Activated CD4-positive, alpha-beta T cell treated with anti-CD3 and anti-CD28 coated beads for 36 hours (primary cell): ENCODE measurements at regions of chr13 and their contacts with region 1.

Region 1: GRCh38 chr13:52011632-52012511 is at the start of gene ALG11:
- DNase-seq: peak; percentile 100
- ATAC-seq: peak; percentile 99
- H3K4me3 Mint-ChIP-seq: peak within 1 kb of the TSS; percentile 100
- H3K27ac Mint-ChIP-seq: peak within 1 kb of the TSS; percentile 91
- H3K4me1 Mint-ChIP-seq: peaks cover 20% of the 10 kb centered on the region
- H3K27me3 Mint-ChIP-seq: peaks cover 17% of the 10 kb centered on the region
- total RNA-seq, gene ALG11: 14.1 to 18.1 TPM

Region 2: GRCh38 chr13:51583875-51584730 is 427.8 kb before region 1 on chr13 and contains the start of gene WDFY2:
- CTCF ChIA-PET with region 1: no interaction called
- POLR2A ChIA-PET with region 1: no interaction called
- intact Hi-C with region 1: loop called (anchors 1 to 2 kb)
- DNase-seq: peak; percentile 100
- ATAC-seq: peak; percentile 88
- H3K4me3 Mint-ChIP-seq: peak within 1 kb of the TSS; percentile 89
- H3K27ac Mint-ChIP-seq: peak within 1 kb of the TSS; percentile 95
- H3K4me1 Mint-ChIP-seq: peaks cover 37% of the 10 kb centered on the region
- H3K27me3 Mint-ChIP-seq: no peaks in the 10 kb centered on the region
- total RNA-seq, gene WDFY2: 7.4 to 9.5 TPM

Region 3: GRCh38 chr13:51825165-51825592 is 186.7 kb before region 1 on chr13:
- CTCF ChIA-PET with region 1: no interaction called
- POLR2A ChIA-PET with region 1: no interaction called
- intact Hi-C with region 1: loop called in 1 of 2 experiments (anchors 5 kb)
- DNase-seq: no peak
- ATAC-seq: peak; percentile 40
- H3K4me3 Mint-ChIP-seq: peak overlapping the region; percentile 69
- H3K27ac Mint-ChIP-seq: peak overlapping the region; percentile 92
- H3K4me1 Mint-ChIP-seq: peaks cover 91% of the 10 kb centered on the region
- H3K27me3 Mint-ChIP-seq: no peaks in the 10 kb centered on the region

Region 4: GRCh38 chr13:52061587-52061986 is 49.7 kb after region 1 on chr13:
- CTCF ChIA-PET with region 1: no interaction called
- POLR2A ChIA-PET with region 1: no interaction called
- intact Hi-C with region 1: no loop called
- DNase-seq: no peak
- ATAC-seq: no peak
- H3K4me3 Mint-ChIP-seq: no peak overlapping the region
- H3K27ac Mint-ChIP-seq: no peak overlapping the region
- H3K4me1 Mint-ChIP-seq: no peaks in the 10 kb centered on the region
- H3K27me3 Mint-ChIP-seq: no peaks in the 10 kb centered on the region

Region 5: DNA sequence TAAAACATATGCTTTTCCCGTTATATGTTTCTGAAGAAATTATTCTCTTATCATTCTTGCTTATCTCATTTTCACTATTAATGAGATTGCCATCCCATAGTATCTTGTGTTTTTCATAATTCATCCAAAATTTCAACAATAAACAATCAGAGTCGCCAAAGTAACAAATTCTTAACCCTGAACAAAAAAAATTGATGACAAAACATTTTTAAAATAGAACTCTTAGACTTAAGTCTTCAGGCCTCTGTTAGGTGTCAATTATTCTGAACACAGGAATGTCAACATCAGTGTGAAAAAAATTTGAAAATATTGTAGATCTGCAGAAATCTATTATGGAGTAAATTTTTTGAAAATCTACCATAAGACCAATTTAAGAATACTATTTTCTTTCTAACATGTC is 79.6 kb after region 1 on chr13:
- CTCF ChIA-PET with region 1: no interaction called
- POLR2A ChIA-PET with region 1: no interaction called
- intact Hi-C with region 1: no loop called
- DNase-seq: no peak
- ATAC-seq: no peak
- H3K4me3 Mint-ChIP-seq: no peak overlapping the region
- H3K27ac Mint-ChIP-seq: no peak overlapping the region
- H3K4me1 Mint-ChIP-seq: no peaks in the 10 kb centered on the region
- H3K27me3 Mint-ChIP-seq: peaks cover 2% of the 10 kb centered on the region

Region 6: GRCh38 chr13:52159321-52160086 is 147.6 kb after region 1 on chr13 and contains the start of gene NEK3:
- CTCF ChIA-PET with region 1: interaction called, 4 read pairs
- POLR2A ChIA-PET with region 1: no interaction called
- intact Hi-C with region 1: loop called in 1 of 2 experiments (anchors 1 kb)
- DNase-seq: peak; percentile 77
- ATAC-seq: peak; percentile 80
- H3K4me3 Mint-ChIP-seq: peak within 1 kb of the TSS; percentile 78
- H3K27ac Mint-ChIP-seq: peak within 1 kb of the TSS; percentile 85
- H3K4me1 Mint-ChIP-seq: peaks cover 30% of the 10 kb centered on the region
- H3K27me3 Mint-ChIP-seq: no peaks in the 10 kb centered on the region
- total RNA-seq, gene NEK3: 10.5 to 12.0 TPM

Region 7: DNA sequence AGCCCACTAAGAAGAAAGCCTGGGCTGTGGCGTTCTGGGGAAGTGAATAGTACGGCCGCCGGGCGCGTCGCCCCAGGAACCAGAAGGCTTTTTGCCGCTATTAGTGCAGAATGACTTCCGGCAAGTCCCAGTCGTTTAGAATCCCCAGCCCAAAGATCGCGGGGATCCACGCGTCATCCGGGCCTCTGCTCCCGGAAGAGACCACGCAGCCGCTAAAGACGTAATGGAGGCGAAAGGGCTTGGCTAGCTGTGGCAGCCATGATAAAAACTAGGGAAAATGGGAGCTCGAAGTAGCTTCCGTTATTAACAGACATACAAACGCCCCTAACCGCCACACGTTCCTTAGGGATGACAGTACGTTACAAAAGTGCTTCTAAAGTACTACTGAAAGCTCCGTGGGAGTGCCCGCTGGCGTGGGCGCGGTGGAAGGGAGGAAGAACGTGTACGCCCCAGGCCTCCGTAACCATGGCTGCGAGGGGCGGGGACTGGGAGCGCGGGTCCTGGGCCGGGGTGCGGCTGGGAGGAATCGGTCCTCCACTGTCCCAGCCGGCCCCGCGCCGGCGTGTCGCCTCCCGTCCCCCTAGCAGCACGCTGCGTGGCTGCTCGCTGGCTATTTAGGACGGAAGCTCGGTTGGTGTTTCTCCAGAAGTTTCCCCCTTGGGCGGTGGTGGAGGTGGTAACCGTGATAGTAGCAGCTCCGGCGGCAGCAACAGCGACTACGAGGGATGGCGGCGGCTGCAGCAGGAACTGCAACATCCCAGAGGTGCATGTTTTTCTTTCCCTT is 640.5 kb after region 1 on chr13 and contains the start of gene SUGT1:
- CTCF ChIA-PET with region 1: no interaction called
- POLR2A ChIA-PET with region 1: interaction called, 3 read pairs
- intact Hi-C with region 1: loop called in 1 of 2 experiments (anchors 2 kb)
- DNase-seq: peak; percentile 97
- ATAC-seq: peak; percentile 96
- H3K4me3 Mint-ChIP-seq: no peak within 1 kb of the TSS
- H3K27ac Mint-ChIP-seq: no peak within 1 kb of the TSS
- H3K4me1 Mint-ChIP-seq: peaks cover 14% of the 10 kb centered on the region
- H3K27me3 Mint-ChIP-seq: no peaks in the 10 kb centered on the region
- total RNA-seq, gene SUGT1: 58.3 to 64.8 TPM

Region 8: DNA sequence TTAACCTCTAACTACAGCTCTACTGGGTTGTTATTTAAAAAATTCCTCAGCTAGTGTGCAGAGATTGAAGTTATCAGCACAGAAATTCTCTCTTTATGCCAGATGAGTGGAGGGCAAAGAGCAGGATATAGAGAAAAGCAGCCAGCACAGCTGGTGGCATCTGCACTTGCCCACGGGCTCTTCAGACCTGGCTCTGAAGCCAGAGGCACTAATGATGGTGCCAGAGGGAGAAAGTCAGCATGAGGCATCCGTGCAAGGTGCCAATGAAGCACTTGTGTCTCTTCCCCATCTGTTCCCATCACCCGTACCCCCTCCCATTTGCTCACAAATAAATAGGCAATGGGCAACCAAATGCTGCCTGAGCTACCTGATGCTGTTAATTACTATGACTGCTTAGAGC is 1155.7 kb after region 1 on chr13:
- CTCF ChIA-PET with region 1: no interaction called
- POLR2A ChIA-PET with region 1: no interaction called
- intact Hi-C with region 1: no loop called
- DNase-seq: no peak
- ATAC-seq: no peak
- H3K4me3 Mint-ChIP-seq: no peak overlapping the region
- H3K27ac Mint-ChIP-seq: no peak overlapping the region
- H3K4me1 Mint-ChIP-seq: no peaks in the 10 kb centered on the region
- H3K27me3 Mint-ChIP-seq: peaks cover 5% of the 10 kb centered on the region